ENCODE measurements at regions of chr2 and their contacts with region 1.

Region 1: DNA sequence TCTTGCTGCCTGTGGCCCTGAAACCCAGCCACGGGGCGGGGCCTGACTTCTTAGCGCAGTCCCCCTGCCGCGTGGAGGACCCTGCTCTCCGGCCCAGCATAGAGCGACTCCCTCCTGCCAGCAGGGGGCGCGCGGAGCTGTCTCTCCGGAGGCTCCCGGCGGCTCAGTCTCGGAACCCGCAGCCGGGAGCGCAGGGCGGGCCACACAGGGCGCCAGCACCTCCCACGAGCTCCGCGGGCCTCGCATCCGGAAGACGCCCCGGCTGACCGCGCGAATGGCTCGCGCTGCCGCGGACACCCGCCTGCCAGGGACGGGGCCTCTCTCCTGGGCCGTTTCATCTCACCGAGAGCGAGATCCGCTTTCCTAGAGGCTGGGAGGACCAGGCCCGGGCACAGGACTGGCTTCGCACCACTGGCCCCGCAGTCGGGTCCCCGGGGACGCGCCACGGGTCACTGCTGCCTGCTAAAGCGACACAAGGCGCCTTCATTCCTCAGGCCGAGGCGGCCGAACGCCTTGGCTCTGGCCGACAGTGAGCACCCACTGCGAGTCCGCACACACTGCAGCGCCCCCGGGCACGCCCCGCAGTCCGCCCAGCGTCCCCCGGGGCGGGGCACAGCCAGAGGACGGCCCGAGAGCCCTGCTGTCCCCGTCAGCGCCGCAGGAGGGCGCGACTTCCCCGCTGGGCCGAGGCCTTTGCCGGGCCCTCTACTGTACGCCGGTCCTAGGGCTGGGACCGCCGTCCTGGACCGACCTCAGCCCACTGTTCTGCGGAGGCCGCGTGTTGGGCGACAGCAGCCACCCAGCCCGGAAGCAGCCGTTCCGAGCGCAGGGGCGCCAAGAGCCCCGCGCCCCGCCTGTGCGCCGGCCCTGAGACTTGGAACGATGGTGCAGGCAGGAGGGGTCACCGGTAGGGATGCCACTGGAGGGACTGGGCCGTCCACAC is 39.0 kb upstream of the ARHGEF4 start:
- DNase-seq: peak; percentile 96
- ATAC-seq: peak; percentile 92
- H3K4me3 Mint-ChIP-seq: peak overlapping the region; percentile 62
- H3K27ac Mint-ChIP-seq: no peak overlapping the region
- H3K4me1 Mint-ChIP-seq: peaks cover 3% of the 10 kb centered on the region
- H3K27me3 Mint-ChIP-seq: peaks cover 3% of the 10 kb centered on the region

Region 2: GRCh38 chr2:129129096-129129495 is 1668.7 kb before region 1 on chr2:
- CTCF ChIA-PET with region 1: no interaction called
- POLR2A ChIA-PET with region 1: no interaction called
- intact Hi-C with region 1: no loop called
- DNase-seq: no peak
- ATAC-seq: no peak
- H3K4me3 Mint-ChIP-seq: no peak overlapping the region
- H3K27ac Mint-ChIP-seq: no peak overlapping the region
- H3K4me1 Mint-ChIP-seq: no peaks in the 10 kb centered on the region
- H3K27me3 Mint-ChIP-seq: no peaks in the 10 kb centered on the region

Region 3: GRCh38 chr2:130824492-130825061 is 26.8 kb after region 1 on chr2:
- CTCF ChIA-PET with region 1: interaction called, 15 read pairs
- POLR2A ChIA-PET with region 1: interaction called, 6 read pairs
- intact Hi-C with region 1: loop called (anchors 1 kb)
- DNase-seq: peak; percentile 80
- ATAC-seq: peak; percentile 95
- H3K4me3 Mint-ChIP-seq: peak overlapping the region; percentile 35
- H3K27ac Mint-ChIP-seq: peak overlapping the region; percentile 89
- H3K4me1 Mint-ChIP-seq: peaks cover 20% of the 10 kb centered on the region
- H3K27me3 Mint-ChIP-seq: no peaks in the 10 kb centered on the region

Region 4: GRCh38 chr2:130873700-130874346 is 76.1 kb after region 1 on chr2:
- CTCF ChIA-PET with region 1: interaction called, 156 read pairs
- POLR2A ChIA-PET with region 1: no interaction called
- intact Hi-C with region 1: loop called (anchors 1 kb)
- DNase-seq: peak; percentile 84
- ATAC-seq: peak; percentile 88
- H3K4me3 Mint-ChIP-seq: no peak overlapping the region
- H3K27ac Mint-ChIP-seq: no peak overlapping the region
- H3K4me1 Mint-ChIP-seq: peaks cover 4% of the 10 kb centered on the region
- H3K27me3 Mint-ChIP-seq: peaks cover 15% of the 10 kb centered on the region

Region 5: DNA sequence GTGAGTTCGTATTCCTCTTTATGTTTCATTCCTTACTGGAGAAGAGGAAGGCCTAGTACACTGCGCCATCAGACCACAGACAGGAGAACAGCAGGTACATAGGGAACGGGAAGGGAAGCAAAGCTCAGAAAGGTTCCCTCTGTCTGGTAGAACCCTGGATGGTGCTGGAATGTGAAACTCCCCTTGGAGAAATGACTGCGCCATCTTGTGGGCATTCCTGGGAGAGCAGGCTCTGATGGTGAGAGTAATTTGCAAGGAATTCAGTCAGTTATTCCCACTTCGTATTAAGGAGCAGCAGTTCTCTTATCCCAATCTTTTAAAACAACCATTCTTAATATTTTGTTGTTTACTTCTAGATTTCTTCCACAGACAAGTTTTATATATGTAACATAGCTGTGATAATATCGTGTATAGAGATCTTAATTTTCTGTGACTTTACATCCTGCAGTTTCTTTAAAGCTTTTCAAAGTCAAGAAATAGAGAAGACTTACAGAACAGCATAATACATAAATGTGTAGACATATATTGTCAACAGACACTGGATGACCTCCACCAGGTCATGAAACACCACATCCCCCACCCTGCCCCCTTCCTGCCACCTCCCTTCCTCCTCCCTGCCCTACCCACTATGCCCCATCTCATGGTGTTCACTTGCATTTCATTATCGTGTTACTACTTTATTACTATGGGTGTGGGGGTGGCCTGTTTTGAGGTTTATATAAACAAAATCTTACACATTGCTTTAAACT is 122.8 kb after region 1 on chr2:
- CTCF ChIA-PET with region 1: interaction called, 17 read pairs
- POLR2A ChIA-PET with region 1: no interaction called
- intact Hi-C with region 1: loop called (anchors 1 kb)
- DNase-seq: peak; percentile 71
- ATAC-seq: no peak
- H3K4me3 Mint-ChIP-seq: no peak overlapping the region
- H3K27ac Mint-ChIP-seq: no peak overlapping the region
- H3K4me1 Mint-ChIP-seq: no peaks in the 10 kb centered on the region
- H3K27me3 Mint-ChIP-seq: peaks cover 5% of the 10 kb centered on the region

Region 6: DNA sequence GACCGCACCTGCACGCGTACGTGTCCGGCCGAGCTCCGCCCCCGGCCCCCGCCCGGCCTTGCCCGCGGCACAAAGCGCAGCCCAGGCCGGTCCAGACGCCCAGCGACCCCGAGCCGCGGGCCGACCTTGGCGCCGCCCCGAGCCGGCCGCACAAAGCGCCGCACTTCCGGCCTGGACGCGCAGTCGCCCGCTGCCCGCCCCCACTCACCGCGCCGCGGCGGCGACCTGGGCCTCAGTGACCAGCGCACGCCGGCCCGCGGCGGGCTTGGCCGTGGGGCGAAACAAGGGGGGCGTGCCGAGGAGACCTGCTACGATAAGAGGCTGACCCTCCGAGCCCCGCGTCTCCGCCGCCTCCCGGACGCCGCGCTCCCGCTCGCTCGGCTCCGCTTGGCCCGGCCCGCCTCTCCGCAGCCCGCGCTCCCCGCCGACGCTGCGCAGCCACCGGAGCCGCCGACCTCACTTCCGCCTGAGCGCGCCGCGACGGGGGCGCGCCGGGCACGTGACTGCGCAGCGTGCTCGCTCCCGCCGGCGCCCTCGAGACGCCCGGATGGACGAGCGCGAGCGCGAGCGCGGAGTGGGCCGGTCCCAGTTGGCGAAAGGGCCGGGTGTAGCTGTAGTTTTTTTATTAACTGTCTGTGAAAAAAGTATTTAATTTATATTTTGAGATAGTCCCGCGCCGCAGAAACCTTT is 295.4 kb after region 1 on chr2 and contains the start of gene FAM168B:
- CTCF ChIA-PET with region 1: interaction called, 5 read pairs
- POLR2A ChIA-PET with region 1: no interaction called
- intact Hi-C with region 1: loop called (anchors 1 to 5 kb)
- DNase-seq: peak; percentile 93
- ATAC-seq: peak; percentile 85
- H3K4me3 Mint-ChIP-seq: peak within 1 kb of the TSS; percentile 81
- H3K27ac Mint-ChIP-seq: peak within 1 kb of the TSS; percentile 97
- H3K4me1 Mint-ChIP-seq: peaks cover 26% of the 10 kb centered on the region
- H3K27me3 Mint-ChIP-seq: no peaks in the 10 kb centered on the region
- total RNA-seq, gene FAM168B: 59.8 to 74.7 TPM